RWPE1 (cell line): ENCODE measurements at regions of chr22 and their contacts with region 1.

Region 1: DNA sequence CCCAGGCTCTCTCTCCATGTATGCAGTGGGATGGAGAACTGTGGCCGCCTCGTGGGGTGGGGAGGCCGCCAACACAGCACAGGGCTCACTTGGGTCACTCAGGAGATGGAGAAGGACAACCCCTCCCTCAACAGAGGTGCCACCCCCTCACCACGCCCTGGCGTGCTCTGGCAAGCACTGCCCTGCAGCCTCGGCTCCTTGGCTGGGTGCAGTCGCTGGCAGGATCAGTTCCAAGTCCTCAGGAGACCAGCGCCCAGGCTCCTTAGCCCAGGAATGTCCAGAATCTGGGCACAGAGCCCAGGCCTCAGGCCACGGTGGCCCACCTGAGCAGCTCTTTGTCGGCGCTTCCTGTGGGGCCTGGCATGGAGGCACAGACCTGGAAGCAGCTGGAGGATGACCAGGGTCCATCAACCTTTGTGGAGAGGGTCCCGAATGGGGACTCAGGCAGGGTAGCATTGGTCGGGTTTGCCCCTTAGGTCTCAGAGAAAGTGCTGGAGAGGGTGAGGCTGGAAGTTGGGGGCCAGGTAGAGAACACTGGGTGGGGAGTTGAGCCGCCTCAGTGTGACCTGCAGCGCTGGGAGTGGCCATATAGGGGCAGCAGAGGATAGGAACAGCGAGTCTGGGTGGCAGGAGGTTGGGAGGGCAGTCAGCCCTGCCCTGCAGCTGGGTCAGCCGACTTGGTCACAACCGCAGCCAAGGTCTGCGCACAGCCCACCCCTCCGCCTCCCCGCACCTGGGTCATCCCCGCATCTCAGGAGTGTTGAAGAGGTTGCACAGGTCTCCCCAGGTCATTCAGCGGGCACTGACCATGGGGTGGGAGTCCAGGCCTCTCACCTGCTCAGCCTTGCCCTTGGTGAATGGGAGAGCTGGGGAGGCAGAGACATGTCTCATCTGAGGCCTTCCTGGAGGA is 8.2 kb downstream of the SUSD2 start:
- DNase-seq: peak; percentile 76
- H3K27ac ChIP-seq: peak overlapping the region; percentile 88
- CTCF ChIP-seq: peak; percentile 89

Region 2: DNA sequence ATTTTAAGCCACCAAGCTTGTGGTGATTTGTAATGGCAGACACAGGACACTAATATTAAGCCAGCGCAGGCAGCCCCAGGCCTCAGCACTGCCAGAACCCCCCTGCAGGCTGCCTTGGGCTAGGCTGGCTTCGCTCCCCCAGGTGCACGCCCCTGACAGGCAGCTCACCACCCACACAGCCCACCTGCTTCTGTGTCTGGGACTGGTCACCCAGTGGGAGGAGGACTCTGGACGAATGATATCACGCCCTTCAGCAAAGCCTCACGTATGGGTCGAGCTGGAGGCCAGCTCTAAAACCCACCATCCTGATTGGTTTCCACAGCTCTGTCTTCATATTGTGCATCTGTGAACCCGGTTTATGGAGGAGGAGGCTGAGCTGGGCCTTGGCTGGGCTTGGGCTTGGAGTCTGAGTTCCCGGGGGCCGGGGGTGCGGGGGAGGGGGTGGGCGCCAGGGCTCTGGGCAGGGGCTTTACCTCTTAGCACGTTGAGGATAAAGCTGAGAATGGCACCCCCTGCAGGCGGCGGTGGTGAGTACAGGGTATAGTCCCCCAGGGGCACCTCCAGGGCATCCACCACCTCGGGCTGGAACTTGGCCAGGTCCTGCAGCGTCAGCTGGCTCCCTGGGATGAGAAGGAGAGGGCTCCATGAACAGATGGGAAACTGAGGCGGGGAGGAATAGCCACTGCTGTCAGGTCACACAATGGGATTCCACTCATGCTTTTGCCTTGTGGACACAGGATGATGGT is 41.6 kb after region 1 on chr22:
- CTCF ChIA-PET with region 1: interaction called, 14 read pairs
- POLR2A ChIA-PET with region 1: no interaction called
- DNase-seq: no peak
- H3K27ac ChIP-seq: no peak overlapping the region
- CTCF ChIP-seq: no peak